ENCODE measurements at regions of chr1 and their contacts with region 1.

Region 1: DNA sequence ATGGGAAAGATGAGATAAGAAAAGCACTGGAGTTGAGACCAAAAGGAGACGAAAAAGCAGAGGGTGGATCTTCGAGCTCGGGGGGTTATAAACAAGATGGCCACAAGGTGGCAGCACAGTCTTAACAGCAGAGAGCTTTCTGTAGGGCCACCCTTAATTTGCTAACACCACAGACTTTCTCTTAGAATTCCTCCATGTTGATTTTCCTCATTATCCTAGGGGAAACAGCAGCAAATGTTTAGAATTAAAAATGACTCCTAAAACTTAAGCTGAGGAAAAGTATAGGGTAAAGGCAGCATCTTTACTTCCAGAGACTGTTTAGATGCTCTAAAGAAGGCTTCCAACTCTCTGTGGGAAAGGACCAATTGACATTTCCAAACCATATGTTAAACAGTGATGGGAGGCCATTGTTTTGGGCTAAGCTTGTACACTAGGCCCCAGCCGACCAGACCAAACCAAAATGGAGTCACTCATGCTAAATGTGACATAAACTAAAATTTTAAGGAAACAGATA is 2.5 kb upstream of the APOBEC4 start:
- DNase-seq: peak; percentile 69 to 80 (median 72)
- H3K4me3 ChIP-seq: no peak overlapping the region
- H3K27ac ChIP-seq: no peak overlapping the region
- H3K4me1 ChIP-seq: peaks cover 0 to 9% (median 6%) of the 10 kb centered on the region in 4 experiments
- H3K27me3 ChIP-seq: no peaks in the 10 kb centered on the region

Region 2: GRCh38 chr1:183685112-183685713 is 29.6 kb after region 1 on chr1:
- CTCF ChIA-PET with region 1: interaction called, 11 read pairs
- POLR2A ChIA-PET with region 1: no interaction called
- DNase-seq: peak; percentile 36 to 75 (median 66)
- H3K4me3 ChIP-seq: no peak overlapping the region
- H3K27ac ChIP-seq: no peak overlapping the region
- H3K4me1 ChIP-seq: no peaks in the 10 kb centered on the region
- H3K27me3 ChIP-seq: no peaks in the 10 kb centered on the region

Region 3: GRCh38 chr1:183922197-183922596 is 266.6 kb after region 1 on chr1:
- CTCF ChIA-PET with region 1: interaction called, 138 read pairs
- POLR2A ChIA-PET with region 1: no interaction called
- DNase-seq: no peak
- H3K4me3 ChIP-seq: no peak overlapping the region
- H3K27ac ChIP-seq: no peak overlapping the region
- H3K4me1 ChIP-seq: no peaks in the 10 kb centered on the region
- H3K27me3 ChIP-seq: no peaks in the 10 kb centered on the region

Measured in common myeloid progenitor, CD34-positive (primary cell).